Activated CD4-positive, alpha-beta memory T cell treated with anti-CD3 and anti-CD28 coated beads, Interleukin-2, amount 10 ng/mL, durations not matched to agents 7 days and 5 days (primary cell): ENCODE measurements at regions of chr22 and their contacts with region 1.

Region 1: DNA sequence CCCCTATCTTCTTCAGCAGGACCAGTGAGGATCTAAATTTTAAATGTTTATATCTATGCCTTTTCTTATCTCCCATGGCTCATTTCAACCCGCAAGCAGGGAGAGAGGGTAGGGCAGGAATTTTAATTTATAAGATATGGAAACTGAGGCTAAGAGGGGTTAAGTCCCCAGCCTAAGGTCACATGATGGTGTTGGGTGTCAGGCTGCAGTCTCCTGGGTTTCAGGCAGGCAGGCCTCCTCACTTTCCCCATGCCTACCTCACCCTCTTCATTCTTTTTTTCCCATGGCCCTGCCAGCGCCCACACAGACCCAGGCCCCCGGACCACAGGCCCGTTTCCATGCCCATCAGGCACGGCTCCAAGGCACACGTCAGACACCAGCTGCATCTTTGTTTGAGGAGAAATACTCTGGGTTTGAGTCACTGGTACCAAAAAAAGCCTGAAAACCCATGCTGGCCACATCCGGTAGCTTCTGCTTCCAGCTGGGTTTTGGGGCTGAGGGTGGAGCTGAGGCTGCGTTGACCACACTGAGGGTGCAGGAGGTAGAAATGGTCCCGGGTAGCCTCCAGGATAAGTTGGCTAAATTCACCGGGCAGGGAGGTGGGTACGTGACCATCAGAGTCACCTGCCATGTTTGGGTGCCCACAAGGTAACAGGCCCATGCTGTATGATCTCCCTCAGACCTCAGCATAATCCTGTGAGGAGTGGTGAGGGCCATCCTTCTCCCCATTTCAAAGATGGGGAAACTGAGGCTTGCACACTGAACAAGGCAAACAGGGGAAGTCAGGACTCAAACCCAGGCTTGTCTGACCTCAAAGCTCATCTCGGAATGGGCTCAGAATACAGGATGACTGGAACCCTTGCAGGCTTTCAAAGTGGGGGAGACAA is 7.5 kb downstream of the CRYBB1 start:
- DNase-seq: peak; percentile 84
- H3K4me3 Mint-ChIP-seq: peak overlapping the region; percentile 56
- H3K27ac Mint-ChIP-seq: peak overlapping the region; percentile 85
- H3K4me1 Mint-ChIP-seq: peaks cover 38% of the 10 kb centered on the region
- H3K27me3 Mint-ChIP-seq: peaks cover 22% of the 10 kb centered on the region

Region 2: DNA sequence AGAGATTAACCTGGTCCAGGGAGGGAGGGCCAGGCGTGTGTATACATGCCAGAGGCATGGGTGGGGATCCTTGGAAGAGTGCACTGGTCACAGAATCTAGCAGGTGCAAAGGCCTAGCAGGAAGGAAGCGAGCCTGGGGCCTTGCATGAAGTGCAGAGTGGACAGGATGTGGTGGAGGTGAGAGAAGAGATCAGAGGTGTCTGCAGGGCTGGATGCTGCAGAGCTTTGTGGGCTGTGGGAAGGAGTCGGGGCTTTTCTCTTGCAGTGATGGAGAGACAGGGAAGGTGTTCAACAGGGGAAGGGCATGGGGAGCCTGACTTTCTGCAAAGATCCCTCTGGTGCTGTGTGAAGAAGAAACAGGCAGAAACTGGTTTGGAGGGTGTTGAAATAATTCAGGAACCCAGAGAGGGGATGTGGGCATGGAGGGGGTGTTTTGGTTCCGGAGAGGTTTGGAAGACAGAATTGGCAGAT is 17.9 kb before region 1 on chr22:
- CTCF ChIA-PET with region 1: interaction called, 8 read pairs
- POLR2A ChIA-PET with region 1: interaction called, 16 read pairs
- DNase-seq: peak; percentile 80
- H3K4me3 Mint-ChIP-seq: peak overlapping the region; percentile 45
- H3K27ac Mint-ChIP-seq: peak overlapping the region; percentile 82
- H3K4me1 Mint-ChIP-seq: peaks cover 69% of the 10 kb centered on the region
- H3K27me3 Mint-ChIP-seq: peaks cover 4% of the 10 kb centered on the region

Region 3: GRCh38 chr22:26650722-26651421 is 40.6 kb after region 1 on chr22:
- CTCF ChIA-PET with region 1: no interaction called
- POLR2A ChIA-PET with region 1: no interaction called
- DNase-seq: no peak
- H3K4me3 Mint-ChIP-seq: no peak overlapping the region
- H3K27ac Mint-ChIP-seq: no peak overlapping the region
- H3K4me1 Mint-ChIP-seq: peaks cover 58% of the 10 kb centered on the region
- H3K27me3 Mint-ChIP-seq: peaks cover 29% of the 10 kb centered on the region

Region 4: GRCh38 chr22:26665813-26666231 is 55.5 kb after region 1 on chr22:
- CTCF ChIA-PET with region 1: no interaction called
- POLR2A ChIA-PET with region 1: no interaction called
- DNase-seq: no peak
- H3K4me3 Mint-ChIP-seq: no peak overlapping the region
- H3K27ac Mint-ChIP-seq: peak overlapping the region; percentile 84
- H3K4me1 Mint-ChIP-seq: peaks cover 74% of the 10 kb centered on the region
- H3K27me3 Mint-ChIP-seq: no peaks in the 10 kb centered on the region

Region 5: DNA sequence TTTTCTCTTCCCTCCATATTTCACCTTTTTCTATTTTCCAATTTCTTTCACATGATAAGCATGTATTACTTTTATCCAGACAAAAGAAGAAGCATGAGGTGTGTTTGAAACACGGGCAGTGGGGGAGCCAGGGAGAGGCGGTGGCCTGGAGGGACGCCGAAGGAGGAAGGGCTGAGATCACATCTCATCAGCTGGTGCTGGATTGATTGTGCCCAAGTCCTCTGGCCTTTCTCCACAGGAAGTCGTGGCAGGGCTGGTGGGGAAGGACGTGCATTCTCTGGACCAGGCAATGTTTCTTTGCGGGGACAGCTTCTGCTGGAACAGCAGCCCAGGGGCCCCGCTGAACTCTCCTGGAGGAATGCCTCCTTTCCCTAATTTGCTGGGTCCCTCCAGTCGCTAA is 129.9 kb after region 1 on chr22:
- CTCF ChIA-PET with region 1: no interaction called
- POLR2A ChIA-PET with region 1: no interaction called
- DNase-seq: no peak
- H3K4me3 Mint-ChIP-seq: no peak overlapping the region
- H3K27ac Mint-ChIP-seq: no peak overlapping the region
- H3K4me1 Mint-ChIP-seq: no peaks in the 10 kb centered on the region
- H3K27me3 Mint-ChIP-seq: no peaks in the 10 kb centered on the region